ENCODE measurements at regions of chr13 and their contacts with region 1.

Region 1: DNA sequence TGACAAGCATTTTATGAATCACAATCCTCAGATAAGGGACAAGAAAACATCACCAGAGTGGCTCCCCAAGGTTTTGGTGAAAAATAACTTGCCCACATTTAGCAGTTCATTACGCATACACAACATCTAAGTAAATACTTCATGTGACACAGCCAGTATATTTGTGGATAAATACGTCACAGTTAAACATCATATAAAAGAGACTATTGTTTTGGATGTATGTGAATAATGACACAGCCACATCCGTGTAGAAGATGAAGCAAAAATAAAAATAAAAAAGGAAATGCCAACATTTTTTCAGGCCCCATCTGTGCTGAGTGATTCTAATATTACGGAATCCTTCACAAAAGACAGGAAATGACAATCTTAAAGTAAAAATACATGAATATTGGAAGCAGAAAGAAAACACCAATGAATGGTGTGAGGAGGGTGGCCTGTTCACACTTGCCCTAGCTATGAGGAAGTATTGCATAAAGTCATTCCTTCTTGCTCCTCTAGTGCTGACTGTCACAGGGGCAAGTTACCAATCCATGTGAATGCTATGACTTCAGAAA is 457.1 kb downstream of the KLF12 start:
- DNase-seq: peak; percentile 67
- H3K4me3 ChIP-seq: no peak overlapping the region
- H3K27ac ChIP-seq: peak overlapping the region; percentile 81
- H3K4me1 ChIP-seq: no peaks in the 10 kb centered on the region
- H3K27me3 ChIP-seq: no peaks in the 10 kb centered on the region
- CTCF ChIP-seq: no peak

Region 2: GRCh38 chr13:73399347-73400216 is 277.5 kb before region 1 on chr13:
- intact Hi-C with region 1: loop called (anchors 10 kb)
- DNase-seq: peak; percentile 81
- H3K4me3 ChIP-seq: no peak overlapping the region
- H3K27ac ChIP-seq: peak overlapping the region; percentile 77
- H3K4me1 ChIP-seq: peaks cover 7% of the 10 kb centered on the region
- H3K27me3 ChIP-seq: no peaks in the 10 kb centered on the region
- CTCF ChIP-seq: no peak

Measured in colonic mucosa (tissue), 4 donors.